Sigmoid colon (tissue), 7 donors: ENCODE measurements at regions of chr5 and their contacts with region 1.

Region 1: GRCh38 chr5:149990518-149991376 is 9.7 kb downstream of the TIGD6 start:
- DNase-seq: peak; percentile 84
- H3K4me3 ChIP-seq: no peak overlapping the region
- H3K27ac ChIP-seq: no peak overlapping the region
- H3K4me1 ChIP-seq: peaks cover 0 to 5% (median 2%) of the 10 kb centered on the region in 4 donors
- H3K27me3 ChIP-seq: no peaks in the 10 kb centered on the region
- CTCF ChIP-seq: peak; percentile 85 to 96 (median 90)
- EP300 ChIP-seq: no peak
- POLR2A ChIP-seq: no peak

Region 2: GRCh38 chr5:149228618-149229297 is 762.0 kb before region 1 on chr5:
- intact Hi-C with region 1: no loop called
- DNase-seq: peak; percentile 67
- H3K4me3 ChIP-seq: no peak overlapping the region
- H3K27ac ChIP-seq: peak overlapping the region in 3 of 4 donors; percentile 27 to 45 (median 30)
- H3K4me1 ChIP-seq: peaks cover 0 to 16% (median 12%) of the 10 kb centered on the region in 4 donors
- H3K27me3 ChIP-seq: no peaks in the 10 kb centered on the region
- CTCF ChIP-seq: peak; percentile 38 to 58 (median 48)
- EP300 ChIP-seq: no peak
- POLR2A ChIP-seq: no peak

Region 3: DNA sequence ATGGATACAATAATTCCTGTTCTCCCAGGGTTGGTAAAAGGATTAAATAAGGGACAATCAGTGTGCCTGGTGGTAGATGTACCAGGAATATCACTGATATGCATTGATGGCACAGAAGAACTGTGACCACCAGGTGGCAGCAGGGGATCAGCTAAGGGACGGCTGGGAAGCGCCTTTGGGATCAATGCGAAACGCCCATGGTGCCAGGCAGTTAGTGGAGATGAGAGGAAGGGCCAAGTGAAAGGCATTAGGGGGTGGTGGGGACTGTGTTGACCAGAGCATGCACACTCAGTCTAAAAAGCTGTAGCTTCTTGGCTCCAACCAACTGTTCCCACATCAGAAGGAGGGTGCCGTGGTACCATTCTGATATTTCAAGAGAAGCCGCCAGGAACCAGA is 353.9 kb before region 1 on chr5:
- intact Hi-C with region 1: loop called (anchors 2 kb)
- DNase-seq: peak; percentile 50
- H3K4me3 ChIP-seq: no peak overlapping the region
- H3K27ac ChIP-seq: no peak overlapping the region
- H3K4me1 ChIP-seq: peaks cover 0 to 32% (median 26%) of the 10 kb centered on the region in 4 donors
- H3K27me3 ChIP-seq: no peaks in the 10 kb centered on the region
- CTCF ChIP-seq: peak; percentile 59 to 92 (median 82)
- EP300 ChIP-seq: no peak
- POLR2A ChIP-seq: no peak

Region 4: DNA sequence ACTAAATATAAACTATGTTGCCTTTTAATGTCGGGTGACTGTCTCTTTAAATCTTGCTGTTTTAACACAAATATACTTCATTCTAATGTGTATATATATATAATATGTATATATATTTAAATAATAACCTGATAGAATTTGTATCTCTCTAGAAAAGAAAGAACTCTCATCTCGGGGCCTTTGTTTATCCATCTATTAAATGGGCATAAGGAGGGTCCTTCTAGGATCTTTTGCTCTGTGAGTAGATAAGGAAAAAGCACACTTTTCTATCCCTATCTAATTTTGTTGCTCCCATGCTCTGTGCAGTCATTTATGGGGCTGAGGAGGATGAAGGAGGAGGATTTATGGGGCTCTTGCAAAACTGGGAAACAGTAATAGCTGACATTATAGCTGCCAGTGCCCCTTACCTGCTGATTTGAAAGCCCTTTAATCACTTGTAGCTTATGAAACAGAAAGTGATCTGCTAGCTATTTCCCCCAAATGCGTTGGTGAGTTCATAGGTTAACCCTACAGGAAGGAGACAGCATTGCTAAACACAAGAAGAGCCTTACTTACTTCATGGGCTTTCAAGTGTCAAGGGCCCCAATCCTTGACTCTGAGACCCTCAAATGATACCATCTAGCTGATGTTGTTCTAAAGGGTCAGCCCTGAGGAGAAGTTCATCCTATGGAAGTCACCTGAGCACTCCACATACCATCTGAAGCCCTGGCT is 266.5 kb before region 1 on chr5:
- intact Hi-C with region 1: loop called (anchors 10 kb)
- DNase-seq: no peak
- H3K4me3 ChIP-seq: no peak overlapping the region
- H3K27ac ChIP-seq: no peak overlapping the region
- H3K4me1 ChIP-seq: peaks cover 0 to 18% (median 14%) of the 10 kb centered on the region in 4 donors
- H3K27me3 ChIP-seq: no peaks in the 10 kb centered on the region
- CTCF ChIP-seq: no peak
- EP300 ChIP-seq: no peak
- POLR2A ChIP-seq: no peak

Region 5: DNA sequence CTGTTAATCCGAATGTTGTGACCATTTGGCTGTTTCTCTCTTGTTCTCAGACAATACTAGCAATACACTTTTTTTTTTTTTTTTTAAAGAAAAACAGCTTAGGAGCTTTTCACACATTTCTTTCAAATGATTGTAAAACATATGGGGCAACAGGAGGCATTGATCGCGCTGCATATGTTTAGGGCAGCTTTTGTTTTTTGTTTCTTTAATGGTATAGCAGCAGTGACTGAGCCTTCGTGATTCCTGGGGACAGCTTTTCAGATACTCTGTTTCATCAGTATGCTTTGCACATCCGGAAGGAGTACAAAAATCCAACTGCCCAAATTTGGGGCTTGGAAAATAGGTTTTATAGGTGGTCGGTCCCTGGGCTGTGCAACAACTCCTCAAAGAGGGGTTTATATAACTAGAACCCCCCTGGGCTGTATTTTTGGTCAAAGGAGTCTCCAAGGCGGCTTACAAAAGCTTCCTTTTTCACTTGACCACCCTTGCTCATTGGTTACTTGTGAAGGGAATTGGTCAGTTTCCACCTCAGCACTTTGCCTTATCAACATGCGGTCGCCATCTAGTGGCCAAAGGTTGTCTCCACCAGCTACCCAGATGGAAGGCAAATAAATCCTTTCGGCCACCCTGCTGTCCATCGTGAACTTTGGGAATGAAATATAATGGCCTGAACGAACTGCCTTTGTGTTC is 138.0 kb before region 1 on chr5:
- intact Hi-C with region 1: loop called (anchors 5 kb)
- DNase-seq: peak; percentile 87
- H3K4me3 ChIP-seq: no peak overlapping the region
- H3K27ac ChIP-seq: peak overlapping the region; percentile 9 to 63 (median 34)
- H3K4me1 ChIP-seq: peaks cover 0 to 19% (median 15%) of the 10 kb centered on the region in 4 donors
- H3K27me3 ChIP-seq: no peaks in the 10 kb centered on the region
- CTCF ChIP-seq: peak; percentile 85 to 92 (median 89)
- EP300 ChIP-seq: no peak
- POLR2A ChIP-seq: no peak

Region 6: DNA sequence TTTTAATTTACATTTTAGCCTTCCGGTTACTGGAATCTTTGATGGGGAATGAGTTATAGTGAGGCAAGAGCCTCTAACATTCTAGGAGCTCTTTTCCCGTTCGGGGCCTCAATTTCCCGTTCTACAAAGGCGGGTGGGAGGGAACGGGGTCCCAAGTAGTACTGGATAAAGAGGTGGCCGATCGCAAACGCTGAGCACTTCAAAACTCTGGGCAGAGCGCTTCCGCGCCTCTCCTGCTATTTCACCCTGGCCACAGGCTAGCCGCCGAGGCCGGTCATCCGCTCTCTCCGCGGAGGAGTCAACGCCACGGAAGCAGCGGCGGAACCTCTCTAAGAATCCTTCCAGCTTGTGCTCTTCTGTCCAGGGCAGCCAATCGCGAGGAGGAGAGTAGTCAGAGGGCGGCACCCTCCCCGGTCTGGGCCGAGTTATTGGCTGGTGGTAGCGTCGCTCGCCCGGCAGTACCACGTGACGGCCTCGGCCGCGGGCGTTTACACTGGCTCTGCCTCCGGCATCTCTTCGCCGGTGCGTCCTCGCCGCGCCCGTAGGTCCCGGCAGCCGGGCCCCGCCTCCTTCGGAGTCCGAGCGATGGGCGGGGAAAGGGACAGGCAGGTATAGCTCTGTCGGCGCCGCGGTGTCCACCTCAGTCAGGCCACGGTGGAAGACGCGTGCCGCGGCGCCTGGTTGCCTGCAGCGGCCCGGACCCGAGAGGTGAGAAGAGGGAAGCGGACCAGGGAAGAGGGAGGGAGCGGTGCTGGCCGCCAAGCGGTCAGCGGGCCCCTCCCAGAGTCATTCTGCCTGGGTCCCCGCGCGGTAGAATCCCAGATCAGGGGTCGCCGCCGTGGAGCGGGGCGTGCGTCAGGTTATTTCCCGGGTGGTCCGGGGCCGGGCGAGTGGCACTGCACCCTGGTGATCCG is 30.2 kb before region 1 on chr5 and contains the start of gene SLC26A2:
- intact Hi-C with region 1: loop called (anchors 2 kb)
- DNase-seq: peak; percentile 99
- H3K4me3 ChIP-seq: peak within 1 kb of the TSS; percentile 62 to 98 (median 82)
- H3K27ac ChIP-seq: peak within 1 kb of the TSS; percentile 86 to 93 (median 90)
- H3K4me1 ChIP-seq: peaks cover 0 to 19% (median 9%) of the 10 kb centered on the region in 4 donors
- H3K27me3 ChIP-seq: no peaks in the 10 kb centered on the region
- CTCF ChIP-seq: no peak
- EP300 ChIP-seq: no peak
- POLR2A ChIP-seq: peak; percentile 89 to 92
- total RNA-seq, gene SLC26A2: 6.4 to 12.1 (median 7.0) TPM